Ovary (tissue), 10 donors: ENCODE measurements at regions of chr6 and their contacts with region 1.

Region 1: GRCh38 chr6:69349771-69350170 is 447.0 kb downstream of the LMBRD1 start:
- DNase-seq: no peak
- H3K4me3 ChIP-seq: no peak overlapping the region
- H3K27ac ChIP-seq: no peak overlapping the region
- H3K4me1 ChIP-seq: no peaks in the 10 kb centered on the region
- H3K27me3 ChIP-seq: no peaks in the 10 kb centered on the region
- CTCF ChIP-seq: no peak
- EP300 ChIP-seq: no peak
- POLR2A ChIP-seq: no peak

Region 2: GRCh38 chr6:67825201-67825895 is 1524.4 kb before region 1 on chr6:
- intact Hi-C with region 1: loop called in 1 of 4 experiments (anchors 5 kb)
- DNase-seq: no peak
- H3K4me3 ChIP-seq: no peak overlapping the region
- H3K27ac ChIP-seq: no peak overlapping the region
- H3K4me1 ChIP-seq: no peaks in the 10 kb centered on the region
- H3K27me3 ChIP-seq: no peaks in the 10 kb centered on the region
- CTCF ChIP-seq: no peak
- EP300 ChIP-seq: no peak
- POLR2A ChIP-seq: no peak